ENCODE measurements at regions of chr11 and their contacts with region 1.

Region 1: GRCh38 chr11:66466225-66467027 is at the start of gene PELI3:
- DNase-seq: peak; percentile 93
- H3K4me3 ChIP-seq: peak within 1 kb of the TSS; percentile 69
- H3K27ac ChIP-seq: peak within 1 kb of the TSS; percentile 73
- H3K4me1 ChIP-seq: peaks cover 36% of the 10 kb centered on the region
- CTCF ChIP-seq: no peak
- total RNA-seq, gene PELI3: 7.7 and 8.1 TPM in 2 replicates

Region 2: GRCh38 chr11:65981972-65982823 is 484.2 kb before region 1 on chr11:
- CTCF ChIA-PET with region 1: interaction called, 12 read pairs
- POLR2A ChIA-PET with region 1: no interaction called
- intact Hi-C with region 1: no loop called
- DNase-seq: no peak
- H3K4me3 ChIP-seq: no peak overlapping the region
- H3K27ac ChIP-seq: no peak overlapping the region
- H3K4me1 ChIP-seq: no peaks in the 10 kb centered on the region
- CTCF ChIP-seq: no peak

Measured in OCI-LY7 (cell line).